ENCODE measurements at regions of chr11 and their contacts with region 1.

Region 1: DNA sequence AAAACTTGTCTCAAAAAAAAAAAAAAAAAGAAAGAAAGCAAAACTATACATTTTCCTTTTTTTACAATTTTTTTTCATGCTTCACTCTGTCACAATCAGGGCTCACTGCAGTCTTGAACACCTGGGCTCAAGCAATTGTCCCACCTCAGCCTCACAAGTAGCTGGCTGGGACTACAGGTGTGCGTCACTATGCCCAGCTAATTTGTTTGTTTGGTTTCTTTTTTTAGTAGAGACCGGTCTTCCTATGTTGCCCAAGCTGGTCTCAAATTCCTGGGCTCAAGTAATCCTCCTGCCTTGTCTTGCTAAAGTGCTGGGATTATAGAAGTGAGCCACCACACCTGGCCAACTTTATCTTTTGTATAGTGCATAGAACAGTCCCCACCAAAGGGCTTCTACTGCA is 15.0 kb upstream of the CXCR5 start:
- DNase-seq: no peak
- ATAC-seq: no peak
- H3K4me3 ChIP-seq: no peak overlapping the region
- H3K27ac ChIP-seq: no peak overlapping the region
- H3K4me1 ChIP-seq: peaks cover 12% of the 10 kb centered on the region; the same call in 1 of the 2 replicates
- H3K27me3 ChIP-seq: peaks cover 7% of the 10 kb centered on the region
- CTCF ChIP-seq: no peak
- POLR2A ChIP-seq: no peak
- RAD21 ChIP-seq: no peak

Region 2: DNA sequence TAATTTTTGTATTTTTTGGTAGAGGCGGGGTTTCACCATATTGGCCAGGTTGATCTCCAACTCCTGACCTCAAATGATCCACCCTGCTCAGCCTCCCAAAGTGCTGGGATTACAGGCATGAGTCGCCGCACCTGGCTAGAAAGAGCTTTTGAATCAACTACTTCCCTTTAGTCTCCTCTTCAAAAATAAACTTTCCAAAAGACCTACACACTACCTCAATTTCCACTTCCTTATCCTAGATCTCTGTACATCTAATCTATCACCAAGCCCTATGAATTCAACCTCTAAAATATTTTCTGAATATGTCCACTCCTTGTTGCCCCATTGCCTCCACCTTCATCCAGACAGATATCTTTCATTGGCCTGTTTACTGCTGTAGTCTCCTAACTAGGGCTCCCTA is 64.6 kb before region 1 on chr11:
- CTCF ChIA-PET with region 1: no interaction called
- POLR2A ChIA-PET with region 1: no interaction called
- dilution Hi-C with region 1: no loop called
- in situ Hi-C with region 1: no loop called
- intact Hi-C with region 1: loop called (anchors 5 kb)
- DNase-seq: no peak
- ATAC-seq: no peak
- H3K4me3 ChIP-seq: no peak overlapping the region
- H3K27ac ChIP-seq: no peak overlapping the region
- H3K4me1 ChIP-seq: no peaks in the 10 kb centered on the region
- H3K27me3 ChIP-seq: peaks cover 17% of the 10 kb centered on the region
- CTCF ChIP-seq: no peak
- POLR2A ChIP-seq: no peak
- RAD21 ChIP-seq: no peak

Measured in IMR-90 (cell line).